Activated CD4-positive, alpha-beta T cell treated with anti-CD3 and anti-CD28 coated beads for 36 hours (primary cell): ENCODE measurements at regions of chrX and their contacts with region 1.

Region 1: DNA sequence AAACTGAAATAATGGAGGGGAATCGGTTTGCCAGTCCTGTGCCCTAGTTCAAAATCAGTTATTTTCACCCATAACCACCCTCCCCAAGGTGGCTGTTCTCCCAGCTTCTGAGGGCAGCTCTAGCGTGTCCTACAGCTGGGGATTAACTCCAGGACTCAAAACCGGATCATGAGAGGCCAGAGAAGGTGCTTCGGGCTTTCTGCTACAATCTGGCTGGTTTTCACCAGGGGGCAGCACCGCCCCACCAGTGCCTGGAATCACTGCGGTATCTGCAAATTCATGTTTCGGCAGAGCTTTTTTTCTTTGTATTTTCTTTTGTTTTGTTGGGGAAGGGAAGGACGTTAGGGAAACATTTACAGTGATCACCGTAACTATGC is 28.4 kb downstream of the PDHA1 start:
- DNase-seq: peak; percentile 79
- ATAC-seq: peak; percentile 85
- H3K4me3 Mint-ChIP-seq: peak overlapping the region; percentile 69
- H3K27ac Mint-ChIP-seq: peak overlapping the region; percentile 81
- H3K4me1 Mint-ChIP-seq: peaks cover 5% of the 10 kb centered on the region
- H3K27me3 Mint-ChIP-seq: no peaks in the 10 kb centered on the region

Region 2: GRCh38 chrX:18917831-18918230 is 454.3 kb before region 1 on chrX:
- CTCF ChIA-PET with region 1: no interaction called
- POLR2A ChIA-PET with region 1: no interaction called
- intact Hi-C with region 1: no loop called
- DNase-seq: no peak
- ATAC-seq: no peak
- H3K4me3 Mint-ChIP-seq: no peak overlapping the region
- H3K27ac Mint-ChIP-seq: no peak overlapping the region
- H3K4me1 Mint-ChIP-seq: no peaks in the 10 kb centered on the region
- H3K27me3 Mint-ChIP-seq: no peaks in the 10 kb centered on the region

Region 3: GRCh38 chrX:19360903-19361302 is 11.3 kb before region 1 on chrX:
- CTCF ChIA-PET with region 1: interaction called, 17 read pairs
- POLR2A ChIA-PET with region 1: no interaction called
- intact Hi-C with region 1: no loop called
- DNase-seq: no peak
- ATAC-seq: no peak
- H3K4me3 Mint-ChIP-seq: no peak overlapping the region
- H3K27ac Mint-ChIP-seq: no peak overlapping the region
- H3K4me1 Mint-ChIP-seq: no peaks in the 10 kb centered on the region
- H3K27me3 Mint-ChIP-seq: no peaks in the 10 kb centered on the region

Region 4: GRCh38 chrX:19514791-19515614 is 142.8 kb after region 1 on chrX and contains the start of gene MAP3K15:
- CTCF ChIA-PET with region 1: no interaction called
- POLR2A ChIA-PET with region 1: no interaction called
- intact Hi-C with region 1: loop called in 1 of 2 experiments (anchors 1 kb)
- DNase-seq: peak; percentile 46
- ATAC-seq: peak; percentile 67
- H3K4me3 Mint-ChIP-seq: peak within 1 kb of the TSS; percentile 48
- H3K27ac Mint-ChIP-seq: no peak within 1 kb of the TSS
- H3K4me1 Mint-ChIP-seq: no peaks in the 10 kb centered on the region
- H3K27me3 Mint-ChIP-seq: peaks cover 21% of the 10 kb centered on the region
- total RNA-seq, gene MAP3K15: 1.0 to 1.2 TPM

Region 5: DNA sequence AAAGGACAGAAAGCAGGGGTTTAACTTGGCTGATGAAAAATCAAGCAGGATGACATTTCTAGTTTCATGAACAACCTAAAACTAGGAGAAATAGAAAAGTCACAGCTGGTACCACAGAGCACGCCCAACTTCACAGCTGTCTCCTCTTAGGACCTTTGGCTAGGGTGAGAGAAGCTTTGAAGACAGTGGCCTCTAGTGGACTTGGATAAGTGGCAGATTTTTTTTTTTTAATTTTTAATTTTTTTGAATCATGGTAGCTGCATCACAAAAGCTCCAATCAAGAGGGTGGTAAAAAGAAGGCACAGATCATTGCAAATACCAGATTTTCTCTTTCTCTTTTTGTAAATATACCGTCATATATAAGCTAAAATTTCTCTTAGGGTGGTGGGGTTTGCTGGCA is 163.3 kb after region 1 on chrX:
- CTCF ChIA-PET with region 1: interaction called, 6 read pairs
- POLR2A ChIA-PET with region 1: no interaction called
- intact Hi-C with region 1: loop called (anchors 2 to 5 kb)
- DNase-seq: no peak
- ATAC-seq: no peak
- H3K4me3 Mint-ChIP-seq: no peak overlapping the region
- H3K27ac Mint-ChIP-seq: no peak overlapping the region
- H3K4me1 Mint-ChIP-seq: no peaks in the 10 kb centered on the region
- H3K27me3 Mint-ChIP-seq: no peaks in the 10 kb centered on the region

Region 6: GRCh38 chrX:20066968-20067708 is 695.0 kb after region 1 on chrX:
- CTCF ChIA-PET with region 1: no interaction called
- POLR2A ChIA-PET with region 1: no interaction called
- intact Hi-C with region 1: loop called in 1 of 2 experiments (anchors 1 kb)
- DNase-seq: peak; percentile 30
- ATAC-seq: peak; percentile 73
- H3K4me3 Mint-ChIP-seq: no peak overlapping the region
- H3K27ac Mint-ChIP-seq: no peak overlapping the region
- H3K4me1 Mint-ChIP-seq: peaks cover 2% of the 10 kb centered on the region
- H3K27me3 Mint-ChIP-seq: no peaks in the 10 kb centered on the region